Activated CD4-positive, alpha-beta T cell treated with anti-CD3 and anti-CD28 coated beads for 36 hours (primary cell): ENCODE measurements at regions of chr17 and their contacts with region 1.

Region 1: DNA sequence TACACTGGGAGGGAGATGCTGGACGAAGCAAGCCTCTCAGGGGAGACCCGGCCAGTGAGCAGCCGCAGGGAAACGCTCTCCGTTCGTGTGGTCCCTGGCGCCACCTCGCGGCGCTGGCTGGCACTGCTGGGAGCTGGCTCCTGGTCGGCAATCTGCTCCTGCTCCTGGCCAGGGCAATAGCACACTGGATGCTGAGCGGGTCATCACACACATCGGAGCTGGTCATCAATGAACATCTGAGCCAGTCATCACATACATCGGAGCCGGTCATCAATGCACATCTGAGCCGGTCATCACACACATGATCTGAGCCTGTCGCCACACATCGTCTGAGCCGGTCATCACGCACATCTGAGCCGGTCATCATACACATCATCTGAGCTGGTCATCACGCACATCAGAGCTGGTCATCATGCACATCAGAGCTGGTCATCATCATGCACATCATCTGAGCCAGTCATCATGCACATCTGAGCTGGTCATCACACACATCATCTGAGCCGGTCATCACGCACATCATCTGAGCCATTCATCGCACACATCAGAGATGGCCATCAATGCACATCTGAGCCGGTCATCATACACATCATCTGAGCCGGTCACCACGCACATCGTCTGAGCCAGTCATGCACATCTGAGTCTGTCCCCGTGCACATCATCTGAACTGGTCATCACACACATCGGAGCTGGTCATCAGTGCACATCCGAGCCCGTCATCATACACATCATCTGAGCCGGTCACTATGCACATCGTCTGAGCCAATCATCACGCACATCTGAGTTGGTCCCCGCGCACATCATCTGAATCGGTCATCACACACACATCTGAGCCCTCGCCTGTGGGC is 217.3 kb downstream of the RBFOX3 start:
- DNase-seq: peak; percentile 85
- ATAC-seq: peak; percentile 82
- H3K4me3 Mint-ChIP-seq: no peak overlapping the region
- H3K27ac Mint-ChIP-seq: no peak overlapping the region
- H3K4me1 Mint-ChIP-seq: no peaks in the 10 kb centered on the region
- H3K27me3 Mint-ChIP-seq: peaks cover 45% of the 10 kb centered on the region

Region 2: GRCh38 chr17:79019632-79020584 is 373.7 kb before region 1 on chr17:
- CTCF ChIA-PET with region 1: interaction called, 3 read pairs
- POLR2A ChIA-PET with region 1: no interaction called
- intact Hi-C with region 1: loop called in 1 of 2 experiments (anchors 1 kb)
- DNase-seq: peak; percentile 74
- ATAC-seq: peak; percentile 68
- H3K4me3 Mint-ChIP-seq: no peak overlapping the region
- H3K27ac Mint-ChIP-seq: no peak overlapping the region
- H3K4me1 Mint-ChIP-seq: peaks cover 3% of the 10 kb centered on the region
- H3K27me3 Mint-ChIP-seq: peaks cover 23% of the 10 kb centered on the region

Region 3: GRCh38 chr17:79045842-79046196 is 347.8 kb before region 1 on chr17:
- CTCF ChIA-PET with region 1: interaction called, 19 read pairs
- POLR2A ChIA-PET with region 1: no interaction called
- intact Hi-C with region 1: loop called in 1 of 2 experiments (anchors 1 kb)
- DNase-seq: peak; percentile 81
- ATAC-seq: peak; percentile 95
- H3K4me3 Mint-ChIP-seq: no peak overlapping the region
- H3K27ac Mint-ChIP-seq: no peak overlapping the region
- H3K4me1 Mint-ChIP-seq: no peaks in the 10 kb centered on the region
- H3K27me3 Mint-ChIP-seq: peaks cover 7% of the 10 kb centered on the region

Region 4: DNA sequence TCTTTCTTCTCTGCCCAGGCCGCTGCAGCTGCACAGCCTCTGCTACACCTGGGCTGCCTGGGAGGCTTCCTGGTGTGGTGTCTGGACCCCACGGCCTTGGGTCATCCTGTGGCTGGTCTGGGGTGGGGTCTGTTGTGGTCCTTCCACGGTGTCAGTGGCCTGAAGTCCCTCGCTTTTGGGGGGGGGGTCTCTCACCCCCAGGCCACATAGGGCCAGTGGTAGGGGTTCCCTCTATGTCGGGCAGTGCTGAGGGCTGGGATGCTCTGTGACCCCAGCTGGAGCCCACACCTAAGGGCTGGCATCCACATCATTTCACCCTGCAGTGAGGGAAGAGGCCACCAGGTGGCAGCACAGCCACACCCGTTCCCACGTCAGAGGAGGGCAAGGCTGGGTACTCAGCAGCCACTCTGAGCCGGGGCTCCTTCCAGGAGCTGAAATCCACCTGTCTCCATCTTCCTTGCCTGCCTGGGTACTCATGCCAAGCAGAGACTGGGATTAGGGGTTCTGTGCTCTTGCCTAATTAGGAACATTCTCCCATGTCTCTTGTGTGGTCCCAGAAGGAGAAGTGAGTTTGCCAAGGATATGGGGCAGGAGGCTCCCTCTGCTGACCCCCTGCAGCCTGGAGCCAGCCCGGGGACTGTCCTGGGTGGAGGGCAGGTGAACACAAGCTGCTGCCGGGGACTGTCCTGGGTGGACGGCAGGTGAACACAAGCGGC is 306.0 kb before region 1 on chr17:
- CTCF ChIA-PET with region 1: interaction called, 62 read pairs
- POLR2A ChIA-PET with region 1: no interaction called
- intact Hi-C with region 1: loop called (anchors 1 kb)
- DNase-seq: peak; percentile 86
- ATAC-seq: peak; percentile 91
- H3K4me3 Mint-ChIP-seq: no peak overlapping the region
- H3K27ac Mint-ChIP-seq: no peak overlapping the region
- H3K4me1 Mint-ChIP-seq: no peaks in the 10 kb centered on the region
- H3K27me3 Mint-ChIP-seq: peaks cover 5% of the 10 kb centered on the region

Region 5: GRCh38 chr17:79188048-79188447 is 205.5 kb before region 1 on chr17:
- CTCF ChIA-PET with region 1: interaction called, 7 read pairs
- POLR2A ChIA-PET with region 1: interaction called, 5 read pairs
- intact Hi-C with region 1: loop called (anchors 1 to 2 kb)
- DNase-seq: peak; percentile 51
- ATAC-seq: peak; percentile 63
- H3K4me3 Mint-ChIP-seq: no peak overlapping the region
- H3K27ac Mint-ChIP-seq: no peak overlapping the region
- H3K4me1 Mint-ChIP-seq: peaks cover 3% of the 10 kb centered on the region
- H3K27me3 Mint-ChIP-seq: peaks cover 39% of the 10 kb centered on the region

Region 6: GRCh38 chr17:79406316-79406715 is 12.7 kb after region 1 on chr17:
- CTCF ChIA-PET with region 1: interaction called, 41 read pairs
- POLR2A ChIA-PET with region 1: no interaction called
- intact Hi-C with region 1: no loop called
- DNase-seq: no peak
- ATAC-seq: no peak
- H3K4me3 Mint-ChIP-seq: no peak overlapping the region
- H3K27ac Mint-ChIP-seq: no peak overlapping the region
- H3K4me1 Mint-ChIP-seq: peaks cover 2% of the 10 kb centered on the region
- H3K27me3 Mint-ChIP-seq: peaks cover 34% of the 10 kb centered on the region

Region 7: GRCh38 chr17:79707931-79708891 is 314.6 kb after region 1 on chr17:
- CTCF ChIA-PET with region 1: interaction called, 3 read pairs
- POLR2A ChIA-PET with region 1: no interaction called
- intact Hi-C with region 1: loop called in 1 of 2 experiments (anchors 5 kb)
- DNase-seq: peak; percentile 77
- ATAC-seq: peak; percentile 73
- H3K4me3 Mint-ChIP-seq: peak overlapping the region; percentile 21
- H3K27ac Mint-ChIP-seq: no peak overlapping the region
- H3K4me1 Mint-ChIP-seq: no peaks in the 10 kb centered on the region
- H3K27me3 Mint-ChIP-seq: no peaks in the 10 kb centered on the region